Activated naive CD4-positive, alpha-beta T cell treated with anti-CD3 and anti-CD28 coated beads for 36 hours (primary cell): ENCODE measurements at regions of chr3 and their contacts with region 1.

Region 1: GRCh38 chr3:71875461-71875947 is 90.6 kb upstream of the PROK2 start:
- DNase-seq: peak; percentile 92
- H3K4me3 Mint-ChIP-seq: no peak overlapping the region
- H3K27ac Mint-ChIP-seq: peak overlapping the region; percentile 76
- H3K4me1 Mint-ChIP-seq: peaks cover 35% of the 10 kb centered on the region
- H3K27me3 Mint-ChIP-seq: no peaks in the 10 kb centered on the region

Region 2: GRCh38 chr3:71673486-71673885 is 202.0 kb before region 1 on chr3:
- CTCF ChIA-PET with region 1: no interaction called
- intact Hi-C with region 1: no loop called
- DNase-seq: no peak
- H3K4me3 Mint-ChIP-seq: no peak overlapping the region
- H3K27ac Mint-ChIP-seq: no peak overlapping the region
- H3K4me1 Mint-ChIP-seq: no peaks in the 10 kb centered on the region
- H3K27me3 Mint-ChIP-seq: no peaks in the 10 kb centered on the region

Region 3: DNA sequence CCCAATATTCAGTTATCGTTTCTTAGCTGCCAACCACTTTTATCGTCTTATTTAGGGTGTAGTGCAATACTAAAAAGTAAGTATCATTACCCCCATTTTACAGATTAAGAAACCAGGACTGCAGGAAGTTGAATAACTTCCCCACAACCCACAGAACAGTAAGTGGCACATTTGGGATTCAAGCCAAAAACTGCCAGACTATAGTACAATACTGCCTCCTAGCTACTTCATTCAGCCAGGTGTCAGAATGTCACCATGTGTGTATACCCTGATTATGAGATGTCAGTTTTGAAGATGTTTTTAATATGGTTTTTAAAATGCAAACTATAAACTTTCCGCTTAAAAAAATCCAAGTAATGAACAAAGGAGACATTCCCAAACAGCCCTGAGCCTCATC is 16.4 kb before region 1 on chr3:
- CTCF ChIA-PET with region 1: interaction called, 14 read pairs
- intact Hi-C with region 1: no loop called
- DNase-seq: peak; percentile 38
- H3K4me3 Mint-ChIP-seq: no peak overlapping the region
- H3K27ac Mint-ChIP-seq: no peak overlapping the region
- H3K4me1 Mint-ChIP-seq: peaks cover 3% of the 10 kb centered on the region
- H3K27me3 Mint-ChIP-seq: peaks cover 9% of the 10 kb centered on the region

Region 4: GRCh38 chr3:71926262-71926600 is 50.7 kb after region 1 on chr3:
- CTCF ChIA-PET with region 1: interaction called, 6 read pairs
- intact Hi-C with region 1: loop called (anchors 5 kb)
- DNase-seq: peak; percentile 54
- H3K4me3 Mint-ChIP-seq: no peak overlapping the region
- H3K27ac Mint-ChIP-seq: no peak overlapping the region
- H3K4me1 Mint-ChIP-seq: peaks cover 8% of the 10 kb centered on the region
- H3K27me3 Mint-ChIP-seq: no peaks in the 10 kb centered on the region

Region 5: GRCh38 chr3:72031581-72031980 is 156.1 kb after region 1 on chr3:
- CTCF ChIA-PET with region 1: no interaction called
- intact Hi-C with region 1: loop called (anchors 1 kb)
- DNase-seq: peak; percentile 23
- H3K4me3 Mint-ChIP-seq: no peak overlapping the region
- H3K27ac Mint-ChIP-seq: no peak overlapping the region
- H3K4me1 Mint-ChIP-seq: peaks cover 3% of the 10 kb centered on the region
- H3K27me3 Mint-ChIP-seq: peaks cover 8% of the 10 kb centered on the region

Region 6: GRCh38 chr3:72042397-72043203 is 167.1 kb after region 1 on chr3:
- CTCF ChIA-PET with region 1: no interaction called
- intact Hi-C with region 1: no loop called
- DNase-seq: no peak
- H3K4me3 Mint-ChIP-seq: no peak overlapping the region
- H3K27ac Mint-ChIP-seq: no peak overlapping the region
- H3K4me1 Mint-ChIP-seq: no peaks in the 10 kb centered on the region
- H3K27me3 Mint-ChIP-seq: peaks cover 8% of the 10 kb centered on the region

Region 7: GRCh38 chr3:72447059-72447946 is 571.8 kb after region 1 on chr3:
- CTCF ChIA-PET with region 1: no interaction called
- intact Hi-C with region 1: loop called (anchors 10 kb)
- DNase-seq: peak; percentile 88
- H3K4me3 Mint-ChIP-seq: peak overlapping the region; percentile 54
- H3K27ac Mint-ChIP-seq: no peak overlapping the region
- H3K4me1 Mint-ChIP-seq: peaks cover 37% of the 10 kb centered on the region
- H3K27me3 Mint-ChIP-seq: peaks cover 12% of the 10 kb centered on the region

Region 8: GRCh38 chr3:72847751-72848702 is 972.5 kb after region 1 on chr3 and contains the start of gene SHQ1:
- CTCF ChIA-PET with region 1: interaction called, 5 read pairs
- intact Hi-C with region 1: loop called (anchors 1 kb)
- DNase-seq: peak; percentile 98
- H3K4me3 Mint-ChIP-seq: peak within 1 kb of the TSS; percentile 97
- H3K27ac Mint-ChIP-seq: peak within 1 kb of the TSS; percentile 57
- H3K4me1 Mint-ChIP-seq: peaks cover 47% of the 10 kb centered on the region
- H3K27me3 Mint-ChIP-seq: no peaks in the 10 kb centered on the region
- total RNA-seq, gene SHQ1: 19.9 to 20.5 TPM

Region 9: DNA sequence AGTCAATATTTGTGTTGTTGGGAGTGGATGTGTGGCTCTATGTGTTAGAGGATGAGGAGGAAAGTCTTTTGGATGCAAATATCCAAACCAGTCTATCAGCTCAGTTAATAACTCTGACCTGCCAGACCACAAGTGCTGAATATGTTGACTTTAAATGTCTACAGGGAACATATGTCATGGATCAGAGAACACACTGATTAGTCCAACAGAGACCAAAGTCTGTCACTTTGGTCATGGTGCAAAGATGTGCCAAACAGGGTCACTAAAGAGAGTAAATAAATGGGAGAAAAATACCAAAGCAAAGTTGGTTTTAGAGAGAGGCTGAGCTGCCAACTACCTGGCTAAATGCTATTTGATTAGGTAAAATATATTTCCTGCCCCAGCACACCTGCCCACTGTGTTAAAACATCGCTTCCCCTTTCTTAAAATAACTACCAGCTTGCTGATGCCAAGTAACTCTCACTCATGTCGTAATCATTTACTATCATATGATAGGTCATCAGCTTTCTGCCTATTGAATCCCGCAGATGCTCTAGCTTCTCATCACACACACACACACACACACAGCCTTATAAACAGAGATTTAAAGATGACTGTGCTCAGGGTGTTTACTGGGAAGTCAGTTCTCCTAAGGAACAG is 1575.9 kb after region 1 on chr3:
- CTCF ChIA-PET with region 1: no interaction called
- intact Hi-C with region 1: no loop called
- DNase-seq: no peak
- H3K4me3 Mint-ChIP-seq: no peak overlapping the region
- H3K27ac Mint-ChIP-seq: no peak overlapping the region
- H3K4me1 Mint-ChIP-seq: no peaks in the 10 kb centered on the region
- H3K27me3 Mint-ChIP-seq: no peaks in the 10 kb centered on the region